Right ventricle myocardium inferior (tissue), 1 donor: ENCODE measurements at regions of chr9 and their contacts with region 1.

Region 1: GRCh38 chr9:13552606-13553215 is 273.2 kb upstream of the MPDZ start:
- DNase-seq: no peak
- ATAC-seq: no peak

Region 2: DNA sequence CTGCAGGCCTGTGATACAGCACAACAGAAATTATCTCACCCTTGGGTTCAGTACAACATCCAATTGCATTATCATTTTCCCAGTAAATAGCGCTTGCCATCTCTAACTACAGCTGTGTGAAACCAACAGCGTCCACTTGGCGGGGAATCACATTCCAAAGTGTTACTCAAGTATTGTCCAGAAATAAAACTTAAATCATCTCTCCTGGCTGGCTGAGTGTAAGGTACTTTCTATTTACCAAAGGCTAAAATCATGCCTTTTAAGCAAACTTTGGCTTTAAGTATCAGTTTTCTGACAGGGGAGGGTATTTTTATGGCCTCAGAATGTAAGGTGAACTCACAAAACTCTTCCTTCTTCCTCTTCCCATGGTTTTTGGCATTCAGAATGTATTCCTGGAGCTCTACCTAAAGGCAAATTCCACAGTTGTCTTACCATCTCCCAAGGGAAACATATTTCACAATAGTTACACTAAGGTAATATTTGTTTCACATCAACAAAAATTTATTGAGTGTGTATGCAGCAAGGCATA is 67.6 kb before region 1 on chr9:
- intact Hi-C with region 1: loop called (anchors 5 kb)
- DNase-seq: peak; percentile 64
- ATAC-seq: peak; percentile 97

Region 3: DNA sequence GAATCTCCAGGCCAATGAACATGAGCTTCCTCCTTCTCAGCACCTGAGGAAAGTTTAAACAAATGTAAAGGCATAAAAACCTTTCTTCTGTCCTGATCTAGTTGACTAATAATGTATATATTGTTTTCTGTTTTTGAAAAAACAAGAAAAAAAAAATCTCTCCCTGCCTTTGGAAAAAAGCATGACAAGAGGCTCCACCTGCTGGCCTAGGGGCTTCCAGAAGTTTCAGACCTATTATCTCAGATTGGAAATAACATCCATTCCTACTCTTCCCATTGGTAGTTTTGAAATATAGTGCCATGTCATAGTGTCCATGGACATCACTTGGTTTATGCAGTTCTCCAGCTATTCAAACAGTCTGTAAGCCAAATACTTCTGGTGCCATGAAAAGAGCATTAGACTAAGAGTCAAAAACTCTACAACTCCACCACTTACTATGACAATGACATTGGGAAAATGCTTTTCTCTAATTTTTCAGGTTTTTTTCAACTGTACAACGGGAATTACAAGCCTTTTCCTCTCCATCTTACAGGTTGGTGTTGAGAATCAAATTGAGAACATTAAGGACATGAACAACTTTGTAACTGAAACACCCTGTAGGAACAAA is 136.4 kb after region 1 on chr9:
- intact Hi-C with region 1: loop called (anchors 5 kb)
- DNase-seq: no peak
- ATAC-seq: no peak